ENCODE measurements at regions of chr12 and their contacts with region 1.

Region 1: DNA sequence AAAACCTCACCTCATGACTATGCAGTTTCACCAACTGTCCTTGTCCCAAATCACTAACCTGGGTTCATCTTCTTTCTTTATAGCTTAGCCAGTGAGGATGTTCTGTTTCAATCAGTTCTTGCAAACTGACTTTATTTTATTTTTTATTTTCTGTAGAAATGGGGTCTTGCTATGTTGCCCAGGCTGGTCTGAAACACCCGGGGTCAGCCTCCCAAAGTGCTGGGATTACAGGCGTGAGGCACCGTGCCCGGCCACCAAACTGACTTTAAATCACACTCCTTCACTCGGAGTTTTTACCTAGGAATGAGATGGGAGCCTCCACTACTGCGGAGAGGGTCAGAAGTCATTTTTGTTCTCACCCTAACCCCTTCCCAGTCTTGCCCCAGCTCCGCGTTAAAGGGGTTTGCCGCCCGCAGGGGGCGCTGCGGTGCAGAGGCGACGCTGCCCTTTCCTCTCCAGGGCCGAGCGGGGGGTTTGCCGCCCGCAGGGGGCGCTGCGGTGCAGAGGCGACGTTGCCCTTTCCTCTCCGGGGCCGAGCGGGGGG is 7.0 kb upstream of the B4GALNT3 start:
- DNase-seq: peak in 30 of 35 experiments; percentile 4 to 72 (median 45)
- ATAC-seq: peak in 1 of 4 experiments; percentile 40
- H3K4me3 ChIP-seq: no peak overlapping the region
- H3K4me3 Mint-ChIP-seq: no peak overlapping the region
- H3K27ac ChIP-seq: no peak overlapping the region
- H3K27ac Mint-ChIP-seq: no peak overlapping the region
- H3K4me1 ChIP-seq: peaks cover 0 to 10% of the 10 kb centered on the region in 2 experiments
- H3K4me1 Mint-ChIP-seq: peaks cover 0 to 5% (median 3%) of the 10 kb centered on the region in 3 donors
- H3K27me3 ChIP-seq: peaks cover 0 to 2% of the 10 kb centered on the region in 2 experiments
- H3K27me3 Mint-ChIP-seq: peaks cover 0 to under 1% of the 10 kb centered on the region in 2 donors

Region 2: GRCh38 chr12:304805-305204 is 147.9 kb before region 1 on chr12:
- CTCF ChIA-PET with region 1: no interaction called
- POLR2A ChIA-PET with region 1: no interaction called
- DNase-seq: no peak
- ATAC-seq: no peak
- H3K4me3 ChIP-seq: no peak overlapping the region
- H3K4me3 Mint-ChIP-seq: no peak overlapping the region
- H3K27ac ChIP-seq: no peak overlapping the region
- H3K27ac Mint-ChIP-seq: no peak overlapping the region
- H3K4me1 ChIP-seq: peaks cover 0 to 2% of the 10 kb centered on the region in 2 experiments
- H3K4me1 Mint-ChIP-seq: peaks cover 49 to 57% (median 55%) of the 10 kb centered on the region in 3 donors
- H3K27me3 ChIP-seq: no peaks in the 10 kb centered on the region
- H3K27me3 Mint-ChIP-seq: no peaks in the 10 kb centered on the region

Region 3: GRCh38 chr12:538731-539539 is 86.2 kb after region 1 on chr12:
- CTCF ChIA-PET with region 1: interaction called, 13 to 17 read pairs
- POLR2A ChIA-PET with region 1: no interaction called
- DNase-seq: peak in 34 of 35 experiments; percentile 35 to 86 (median 60)
- ATAC-seq: peak; percentile 96 to 99 (median 98)
- H3K4me3 ChIP-seq: peak overlapping the region in 1 of 2 donors; percentile 10
- H3K4me3 Mint-ChIP-seq: peak overlapping the region; percentile 8 to 54 (median 50)
- H3K27ac ChIP-seq: peak overlapping the region; percentile 64
- H3K27ac Mint-ChIP-seq: peak overlapping the region; percentile 71 to 82
- H3K4me1 ChIP-seq: peaks cover 16 to 34% of the 10 kb centered on the region in 2 experiments
- H3K4me1 Mint-ChIP-seq: peaks cover 22 to 39% (median 27%) of the 10 kb centered on the region in 3 donors
- H3K27me3 ChIP-seq: peaks cover 0 to 20% of the 10 kb centered on the region in 2 experiments
- H3K27me3 Mint-ChIP-seq: peaks cover 3% of the 10 kb centered on the region in 2 donors

Region 4: DNA sequence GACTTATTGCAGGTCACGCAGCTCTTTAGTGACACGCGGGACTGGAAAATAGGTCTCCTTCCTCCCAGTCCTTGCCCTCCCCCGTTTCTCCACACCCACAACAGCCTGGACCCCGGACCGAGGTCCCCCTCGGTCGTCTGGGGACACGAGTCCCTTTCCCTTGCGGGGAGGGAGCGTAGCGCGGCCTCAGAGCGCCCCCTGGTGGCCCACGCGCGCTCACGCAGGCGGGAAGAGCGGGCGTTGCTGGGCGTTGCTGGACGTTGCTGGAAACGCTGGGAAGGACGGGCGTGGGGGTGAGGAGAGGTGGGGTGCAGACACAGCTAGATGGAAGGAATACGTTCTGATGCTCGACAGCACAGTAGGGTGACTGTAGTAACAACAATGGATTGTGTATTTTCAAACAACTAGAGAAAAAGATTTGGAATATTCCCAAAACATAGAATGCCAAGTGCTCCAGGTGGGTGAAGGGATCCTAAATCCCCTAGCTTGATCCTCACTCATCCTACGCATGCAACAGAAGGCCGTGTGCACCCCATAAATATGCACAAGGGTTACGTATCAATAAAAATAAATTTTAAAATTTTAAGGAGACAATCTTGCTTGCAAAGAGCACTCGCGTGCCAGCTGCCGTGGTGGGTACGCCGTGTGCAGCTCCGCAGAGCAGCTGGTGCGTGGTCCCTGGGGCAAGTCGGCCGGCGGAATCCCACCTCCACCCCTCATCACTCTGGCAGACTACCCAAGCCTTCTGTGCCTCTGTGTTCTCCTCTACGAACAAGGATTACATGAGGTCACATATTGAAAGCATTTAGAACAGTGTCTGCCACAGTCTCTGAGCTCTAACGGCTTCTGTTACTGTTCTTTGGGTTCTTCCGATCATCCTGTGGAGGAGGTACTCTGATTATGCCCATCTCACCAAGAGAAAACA is 94.4 kb after region 1 on chr12:
- CTCF ChIA-PET with region 1: interaction called, 10 to 16 read pairs
- POLR2A ChIA-PET with region 1: no interaction called
- DNase-seq: peak in 32 of 35 experiments; percentile 35 to 83 (median 55)
- ATAC-seq: peak; percentile 76 to 86 (median 80)
- H3K4me3 ChIP-seq: no peak overlapping the region
- H3K4me3 Mint-ChIP-seq: peak overlapping the region in 1 of 3 donors; percentile 31
- H3K27ac ChIP-seq: no peak overlapping the region
- H3K27ac Mint-ChIP-seq: no peak overlapping the region
- H3K4me1 ChIP-seq: peaks cover 4 to 22% of the 10 kb centered on the region in 2 experiments
- H3K4me1 Mint-ChIP-seq: peaks cover 24 to 41% (median 38%) of the 10 kb centered on the region in 3 donors
- H3K27me3 ChIP-seq: peaks cover 0 to 43% of the 10 kb centered on the region in 2 experiments
- H3K27me3 Mint-ChIP-seq: peaks cover 16 to 18% of the 10 kb centered on the region in 2 donors

Measured in T-cell (primary cell).